OCI-LY7 (cell line): ENCODE measurements at regions of chr11 and their contacts with region 1.

Region 1: GRCh38 chr11:66222358-66223149 is 45.9 kb upstream of the RAB1B start:
- DNase-seq: peak; percentile 96
- H3K4me3 ChIP-seq: no peak overlapping the region
- H3K27ac ChIP-seq: no peak overlapping the region
- H3K4me1 ChIP-seq: peaks cover 5% of the 10 kb centered on the region
- CTCF ChIP-seq: peak; percentile 100

Region 2: DNA sequence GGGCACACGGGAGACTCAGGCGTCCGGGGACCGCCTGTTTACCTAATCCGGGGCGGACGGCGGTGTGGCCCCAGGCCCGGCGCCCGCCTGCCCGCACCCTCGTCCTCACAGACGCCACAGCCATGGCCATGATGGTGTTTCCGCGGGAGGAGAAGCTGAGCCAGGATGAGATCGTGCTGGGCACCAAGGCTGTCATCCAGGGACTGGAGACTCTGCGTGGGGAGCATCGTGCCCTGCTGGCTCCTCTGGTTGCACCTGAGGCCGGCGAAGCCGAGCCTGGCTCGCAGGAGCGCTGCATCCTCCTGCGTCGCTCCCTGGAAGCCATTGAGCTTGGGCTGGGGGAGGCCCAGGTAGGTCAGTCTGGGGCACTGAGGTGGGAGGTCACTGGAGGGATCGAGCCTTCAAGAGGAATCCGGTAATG is 35.9 kb after region 1 on chr11:
- CTCF ChIA-PET with region 1: no interaction called
- POLR2A ChIA-PET with region 1: no interaction called
- intact Hi-C with region 1: loop called (anchors 1 kb)
- DNase-seq: no peak
- H3K4me3 ChIP-seq: peak overlapping the region; percentile 100
- H3K27ac ChIP-seq: peak overlapping the region; percentile 93
- H3K4me1 ChIP-seq: peaks cover 17% of the 10 kb centered on the region
- CTCF ChIP-seq: peak; percentile 47; the same call in 1 of the 2 replicates

Region 3: GRCh38 chr11:66282468-66283386 is 60.2 kb after region 1 on chr11:
- CTCF ChIA-PET with region 1: no interaction called
- POLR2A ChIA-PET with region 1: no interaction called
- intact Hi-C with region 1: loop called (anchors 1 kb)
- DNase-seq: peak; percentile 100
- H3K4me3 ChIP-seq: no peak overlapping the region
- H3K27ac ChIP-seq: no peak overlapping the region
- H3K4me1 ChIP-seq: peaks cover 40% of the 10 kb centered on the region
- CTCF ChIP-seq: peak; percentile 91